Transverse colon (tissue), 4 donors: ENCODE measurements at regions of chr2 and their contacts with region 1.

Region 1: GRCh38 chr2:191013932-191014652 is at the start of gene STAT1:
- DNase-seq: peak; percentile 95
- H3K4me3 ChIP-seq: peak within 1 kb of the TSS; percentile 70 to 86 (median 76)
- H3K27ac ChIP-seq: peak within 1 kb of the TSS; percentile 88 to 96 (median 94)
- H3K4me1 ChIP-seq: peaks cover 3 to 46% (median 21%) of the 10 kb centered on the region in 4 donors
- H3K27me3 ChIP-seq: no peaks in the 10 kb centered on the region
- CTCF ChIP-seq: peak in 3 of 5 experiments; percentile 15 to 49 (median 41)
- EP300 ChIP-seq: peak; percentile 64
- POLR2A ChIP-seq: peak; percentile 93
- total RNA-seq, gene STAT1: 23.2 to 67.8 (median 52.2) TPM

Region 2: GRCh38 chr2:190880378-190881073 is 133.6 kb before region 1 on chr2 and contains the start of gene GLS:
- in situ Hi-C with region 1: loop called in 1 of 4 experiments (anchors 25 kb)
- intact Hi-C with region 1: no loop called
- DNase-seq: peak; percentile 98
- H3K4me3 ChIP-seq: peak within 1 kb of the TSS; percentile 70 to 96 (median 90)
- H3K27ac ChIP-seq: peak within 1 kb of the TSS; percentile 98 to 99 (median 98)
- H3K4me1 ChIP-seq: peaks cover 3 to 36% (median 22%) of the 10 kb centered on the region in 4 donors
- H3K27me3 ChIP-seq: no peaks in the 10 kb centered on the region
- CTCF ChIP-seq: no peak
- EP300 ChIP-seq: no peak
- POLR2A ChIP-seq: peak; percentile 98
- total RNA-seq, gene GLS: 58.0 to 141 (median 68.7) TPM

Region 3: DNA sequence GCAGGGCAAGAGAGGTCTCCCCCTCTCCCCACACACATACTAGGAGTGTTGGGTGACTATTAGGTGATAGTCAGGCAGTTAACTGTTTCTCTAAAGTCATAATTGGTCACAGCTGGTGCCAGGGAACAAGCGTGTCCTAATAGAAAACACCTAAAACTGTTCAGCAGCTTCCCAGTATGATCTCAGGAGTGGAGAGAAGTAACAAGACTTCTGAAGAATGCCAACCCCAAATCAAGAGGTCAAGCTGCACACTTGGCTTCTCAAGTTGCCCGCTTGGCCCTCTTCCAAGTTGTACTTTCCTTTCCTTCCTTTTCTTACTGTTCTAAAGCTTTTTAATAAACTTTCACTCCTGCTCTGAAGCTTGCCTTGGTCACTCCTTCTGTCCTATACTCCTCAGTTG is 22.3 kb after region 1 on chr2:
- in situ Hi-C with region 1: no loop called
- intact Hi-C with region 1: loop called (anchors 1 kb)
- DNase-seq: no peak
- H3K4me3 ChIP-seq: no peak overlapping the region
- H3K27ac ChIP-seq: no peak overlapping the region
- H3K4me1 ChIP-seq: peaks cover 0 to under 1% (median 0%) of the 10 kb centered on the region in 4 donors
- H3K27me3 ChIP-seq: no peaks in the 10 kb centered on the region
- CTCF ChIP-seq: no peak
- EP300 ChIP-seq: no peak
- POLR2A ChIP-seq: no peak

Region 4: GRCh38 chr2:191677646-191678436 is 663.7 kb after region 1 on chr2 and contains the start of gene NABP1:
- in situ Hi-C with region 1: loop called in 1 of 4 experiments (anchors 10 kb)
- intact Hi-C with region 1: no loop called
- DNase-seq: peak; percentile 100
- H3K4me3 ChIP-seq: peak within 1 kb of the TSS; percentile 57 to 80 (median 77)
- H3K27ac ChIP-seq: peak within 1 kb of the TSS; percentile 95 to 98 (median 98)
- H3K4me1 ChIP-seq: peaks cover 4 to 43% (median 7%) of the 10 kb centered on the region in 4 donors
- H3K27me3 ChIP-seq: no peaks in the 10 kb centered on the region
- CTCF ChIP-seq: no peak
- EP300 ChIP-seq: peak; percentile 28
- POLR2A ChIP-seq: peak; percentile 100
- total RNA-seq, gene NABP1: 1.00 to 55.6 (median 33.0) TPM